ENCODE measurements at regions of chr3 and their contacts with region 1.

Region 1: GRCh38 chr3:177777699-177778098 is 580.4 kb upstream of the TBL1XR1 start:
- H3K4me3 Mint-ChIP-seq: no peak overlapping the region
- H3K27ac Mint-ChIP-seq: no peak overlapping the region
- H3K4me1 Mint-ChIP-seq: peaks cover 55% of the 10 kb centered on the region
- H3K27me3 Mint-ChIP-seq: no peaks in the 10 kb centered on the region

Region 2: GRCh38 chr3:177050501-177051237 is 727.0 kb before region 1 on chr3:
- intact Hi-C with region 1: loop called (anchors 5 kb)
- H3K4me3 Mint-ChIP-seq: no peak overlapping the region
- H3K27ac Mint-ChIP-seq: no peak overlapping the region
- H3K4me1 Mint-ChIP-seq: peaks cover 6% of the 10 kb centered on the region
- H3K27me3 Mint-ChIP-seq: no peaks in the 10 kb centered on the region

Region 3: DNA sequence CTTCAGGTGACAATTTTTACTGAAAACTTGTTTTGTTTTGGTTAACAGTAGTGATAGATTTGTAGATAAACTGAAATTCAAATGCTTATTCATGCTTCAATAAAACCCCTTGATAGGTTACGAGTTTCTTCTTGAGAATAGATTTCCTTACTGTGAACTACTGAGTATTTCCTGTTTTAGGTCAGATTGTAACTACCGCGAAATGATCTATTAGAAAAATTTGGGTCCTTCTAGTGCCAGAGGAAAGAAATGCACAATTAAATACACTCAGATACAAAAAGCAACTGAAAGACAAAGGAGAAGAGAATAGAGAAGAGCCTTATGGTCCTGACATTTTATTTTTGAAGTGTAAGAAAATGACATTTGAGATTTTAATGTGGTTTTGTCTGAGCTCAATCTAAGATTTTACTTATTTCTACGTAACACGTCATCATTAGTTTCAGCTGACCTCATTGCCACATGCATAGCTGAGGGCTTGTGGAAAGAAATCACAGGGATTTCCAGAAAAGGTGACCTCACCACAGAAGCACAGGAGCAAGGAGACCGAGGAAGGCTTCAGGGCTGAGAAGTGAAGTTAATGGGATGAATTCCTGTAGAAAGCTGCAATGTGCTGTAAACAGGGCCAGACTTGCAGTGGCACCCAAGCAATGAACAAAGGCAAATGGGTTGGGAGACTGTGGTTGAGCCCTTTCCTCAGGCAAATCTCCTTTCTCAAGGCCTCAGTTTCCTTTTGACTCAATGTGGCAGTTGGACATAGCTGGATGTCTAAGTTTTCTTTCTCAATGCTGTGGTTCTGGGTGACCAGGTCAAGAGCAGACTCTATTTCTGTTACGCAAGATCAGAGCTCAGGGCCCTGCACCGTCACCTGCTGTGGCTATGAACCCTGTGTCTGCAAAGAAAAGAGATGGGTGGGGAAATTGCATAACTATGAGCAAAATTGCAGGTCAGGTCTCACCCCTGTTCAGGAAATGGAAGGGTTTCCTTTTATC is 328.4 kb before region 1 on chr3:
- intact Hi-C with region 1: loop called (anchors 10 kb)
- H3K4me3 Mint-ChIP-seq: no peak overlapping the region
- H3K27ac Mint-ChIP-seq: peak overlapping the region; percentile 26
- H3K4me1 Mint-ChIP-seq: peaks cover 30% of the 10 kb centered on the region
- H3K27me3 Mint-ChIP-seq: no peaks in the 10 kb centered on the region

Region 4: GRCh38 chr3:177615015-177615414 is 162.7 kb before region 1 on chr3:
- intact Hi-C with region 1: loop called (anchors 10 kb)
- H3K4me3 Mint-ChIP-seq: no peak overlapping the region
- H3K27ac Mint-ChIP-seq: peak overlapping the region; percentile 61
- H3K4me1 Mint-ChIP-seq: peaks cover 31% of the 10 kb centered on the region
- H3K27me3 Mint-ChIP-seq: no peaks in the 10 kb centered on the region

Measured in dendritic cell treated with granulocyte-macrophage colony-stimulating factor and Interleukin-4, amounts not matched to agents 40 ng/mL and 50 ng/mL, for 4 days (primary cell).